ENCODE measurements at regions of chr6 and their contacts with region 1.

Region 1: GRCh38 chr6:14660806-14661579 is 543.4 kb downstream of the CD83 start:
- DNase-seq: peak; percentile 38
- ATAC-seq: peak; percentile 75
- H3K4me3 Mint-ChIP-seq: no peak overlapping the region
- H3K27ac Mint-ChIP-seq: no peak overlapping the region
- H3K4me1 Mint-ChIP-seq: peaks cover 24% of the 10 kb centered on the region
- H3K27me3 Mint-ChIP-seq: no peaks in the 10 kb centered on the region
- CTCF ChIP-seq: no peak

Region 2: GRCh38 chr6:14310960-14311359 is 350.0 kb before region 1 on chr6:
- CTCF ChIA-PET with region 1: no interaction called
- POLR2A ChIA-PET with region 1: interaction called, 3 read pairs
- intact Hi-C with region 1: loop called (anchors 5 kb)
- DNase-seq: no peak
- ATAC-seq: no peak
- H3K4me3 Mint-ChIP-seq: no peak overlapping the region
- H3K27ac Mint-ChIP-seq: peak overlapping the region; percentile 87
- H3K4me1 Mint-ChIP-seq: peaks cover 84% of the 10 kb centered on the region
- H3K27me3 Mint-ChIP-seq: no peaks in the 10 kb centered on the region
- CTCF ChIP-seq: no peak

Region 3: GRCh38 chr6:14621518-14621917 is 39.5 kb before region 1 on chr6:
- CTCF ChIA-PET with region 1: no interaction called
- POLR2A ChIA-PET with region 1: no interaction called
- intact Hi-C with region 1: loop called (anchors 5 kb)
- DNase-seq: no peak
- ATAC-seq: no peak
- H3K4me3 Mint-ChIP-seq: no peak overlapping the region
- H3K27ac Mint-ChIP-seq: no peak overlapping the region
- H3K4me1 Mint-ChIP-seq: peaks cover 33% of the 10 kb centered on the region
- H3K27me3 Mint-ChIP-seq: no peaks in the 10 kb centered on the region
- CTCF ChIP-seq: no peak

Region 4: GRCh38 chr6:14638906-14639761 is 21.9 kb before region 1 on chr6:
- CTCF ChIA-PET with region 1: interaction called, 5 read pairs
- POLR2A ChIA-PET with region 1: interaction called, 11 read pairs
- intact Hi-C with region 1: loop called (anchors 1 kb)
- DNase-seq: no peak
- ATAC-seq: peak; percentile 60
- H3K4me3 Mint-ChIP-seq: peak overlapping the region; percentile 86
- H3K27ac Mint-ChIP-seq: peak overlapping the region; percentile 96
- H3K4me1 Mint-ChIP-seq: peaks cover 82% of the 10 kb centered on the region
- H3K27me3 Mint-ChIP-seq: no peaks in the 10 kb centered on the region
- CTCF ChIP-seq: no peak

Region 5: DNA sequence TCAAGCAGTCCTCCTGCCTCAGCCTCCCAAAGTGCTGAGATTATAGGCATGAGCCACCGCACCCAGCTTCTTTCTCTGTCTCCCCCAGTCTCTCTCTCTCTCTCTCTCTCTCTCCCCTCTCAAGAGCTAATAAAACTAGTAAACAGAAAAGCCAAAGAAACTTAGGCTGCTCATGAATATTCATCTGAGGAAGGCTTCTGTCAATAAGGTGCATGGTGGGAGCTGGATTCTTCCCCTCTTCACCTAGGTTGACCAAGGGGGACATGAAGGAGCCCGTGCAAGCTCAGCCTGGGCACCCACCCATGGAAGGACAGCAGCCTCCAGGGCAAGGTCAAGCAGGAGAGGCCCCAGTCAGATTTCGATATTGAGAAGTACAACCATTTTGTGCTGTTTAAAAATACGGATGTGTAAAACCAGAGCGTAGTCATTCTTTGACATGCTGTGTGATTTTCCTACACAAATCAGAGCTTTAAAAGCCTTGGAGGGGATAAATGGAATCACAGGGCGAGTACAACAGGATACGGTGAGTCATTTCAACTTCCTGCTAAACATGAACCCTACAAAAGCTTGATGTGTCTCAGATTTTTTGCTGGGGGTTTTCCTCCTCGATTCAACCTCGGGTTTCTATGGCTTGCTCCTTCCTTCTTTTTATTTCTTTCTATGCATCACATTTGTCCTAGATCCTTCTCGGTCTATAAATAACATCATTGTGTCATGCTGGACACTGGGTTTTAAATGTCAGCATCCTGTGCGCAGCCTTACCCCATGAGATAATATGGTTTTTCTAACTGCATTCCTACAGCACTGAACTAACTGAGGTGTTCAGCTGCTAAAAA is 216.0 kb after region 1 on chr6:
- CTCF ChIA-PET with region 1: no interaction called
- POLR2A ChIA-PET with region 1: no interaction called
- intact Hi-C with region 1: loop called (anchors 5 kb)
- DNase-seq: no peak
- ATAC-seq: peak; percentile 86
- H3K4me3 Mint-ChIP-seq: peak overlapping the region; percentile 53
- H3K27ac Mint-ChIP-seq: peak overlapping the region; percentile 82
- H3K4me1 Mint-ChIP-seq: peaks cover 42% of the 10 kb centered on the region
- H3K27me3 Mint-ChIP-seq: no peaks in the 10 kb centered on the region
- CTCF ChIP-seq: no peak

Measured in activated B cell treated with CpG ODN at 0.5 μM for 24 hours (primary cell).